OCI-LY7 (cell line): ENCODE measurements at regions of chr17 and their contacts with region 1.

Region 1: DNA sequence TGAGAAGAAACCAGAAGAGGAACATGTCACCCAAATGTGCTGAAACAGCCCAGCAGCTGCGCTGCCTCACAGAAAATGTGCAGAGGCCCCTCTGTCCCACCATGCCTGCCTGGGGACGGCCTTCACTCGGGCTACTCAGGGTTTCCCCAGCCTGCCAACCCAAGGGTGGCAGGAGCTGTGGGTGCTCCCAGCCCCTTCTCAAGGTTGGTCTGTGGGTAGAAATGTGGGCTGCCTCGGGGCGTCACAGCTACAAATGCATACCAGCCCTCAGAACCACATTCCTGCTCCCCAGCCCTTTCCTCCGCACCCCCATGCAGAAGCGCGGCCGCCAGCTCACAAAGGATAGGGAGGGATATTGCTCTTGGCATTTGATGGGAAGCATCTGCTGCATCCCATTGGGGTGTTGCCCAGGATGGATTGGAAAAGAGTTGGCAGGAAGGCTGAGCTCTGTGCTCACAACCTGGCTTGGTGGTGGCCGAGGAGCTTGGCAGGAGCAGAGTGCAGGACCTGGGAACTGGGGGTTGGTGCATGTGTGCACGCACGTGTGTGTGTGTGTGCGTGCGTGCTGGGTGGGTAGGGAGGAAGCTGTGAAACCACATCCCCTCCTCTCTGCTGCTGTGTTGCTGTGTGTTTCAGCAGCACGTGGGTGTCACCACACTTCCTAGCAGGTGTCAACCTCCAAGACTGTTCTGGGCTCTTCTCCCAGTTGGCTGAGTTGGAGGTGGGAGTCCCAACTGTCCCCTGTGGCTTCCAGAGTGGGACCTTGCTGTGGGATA is 304.4 kb downstream of the SEC14L1 start:
- DNase-seq: peak; percentile 97
- H3K4me3 ChIP-seq: peak overlapping the region; percentile 47
- H3K27ac ChIP-seq: peak overlapping the region; percentile 95
- H3K4me1 ChIP-seq: peaks cover 97% of the 10 kb centered on the region
- CTCF ChIP-seq: no peak

Region 2: GRCh38 chr17:76737082-76737675 is 708.0 kb before region 1 on chr17 and contains the start of gene SRSF2:
- CTCF ChIA-PET with region 1: no interaction called
- POLR2A ChIA-PET with region 1: no interaction called
- intact Hi-C with region 1: loop called (anchors 10 kb)
- DNase-seq: peak; percentile 100
- H3K4me3 ChIP-seq: peak within 1 kb of the TSS; percentile 77
- H3K27ac ChIP-seq: peak within 1 kb of the TSS; percentile 92
- H3K4me1 ChIP-seq: peaks cover 53% of the 10 kb centered on the region
- CTCF ChIP-seq: no peak
- total RNA-seq, gene SRSF2: 1,143 and 2,207 TPM in 2 replicates

Region 3: GRCh38 chr17:77331301-77331864 is 113.8 kb before region 1 on chr17:
- CTCF ChIA-PET with region 1: interaction called, 3 read pairs
- POLR2A ChIA-PET with region 1: interaction called, 4 read pairs
- intact Hi-C with region 1: loop called (anchors 5 kb)
- DNase-seq: peak; percentile 98
- H3K4me3 ChIP-seq: peak overlapping the region; percentile 62
- H3K27ac ChIP-seq: peak overlapping the region; percentile 92
- H3K4me1 ChIP-seq: peaks cover 86% of the 10 kb centered on the region
- CTCF ChIP-seq: peak; percentile 99

Region 4: GRCh38 chr17:77429919-77430752 is 15.0 kb before region 1 on chr17:
- CTCF ChIA-PET with region 1: interaction called, 15 read pairs
- POLR2A ChIA-PET with region 1: interaction called, 73 read pairs
- intact Hi-C with region 1: loop called (anchors 1 kb)
- DNase-seq: peak; percentile 89
- H3K4me3 ChIP-seq: peak overlapping the region; percentile 15
- H3K27ac ChIP-seq: peak overlapping the region; percentile 65
- H3K4me1 ChIP-seq: peaks cover 100% of the 10 kb centered on the region
- CTCF ChIP-seq: peak; percentile 99

Region 5: DNA sequence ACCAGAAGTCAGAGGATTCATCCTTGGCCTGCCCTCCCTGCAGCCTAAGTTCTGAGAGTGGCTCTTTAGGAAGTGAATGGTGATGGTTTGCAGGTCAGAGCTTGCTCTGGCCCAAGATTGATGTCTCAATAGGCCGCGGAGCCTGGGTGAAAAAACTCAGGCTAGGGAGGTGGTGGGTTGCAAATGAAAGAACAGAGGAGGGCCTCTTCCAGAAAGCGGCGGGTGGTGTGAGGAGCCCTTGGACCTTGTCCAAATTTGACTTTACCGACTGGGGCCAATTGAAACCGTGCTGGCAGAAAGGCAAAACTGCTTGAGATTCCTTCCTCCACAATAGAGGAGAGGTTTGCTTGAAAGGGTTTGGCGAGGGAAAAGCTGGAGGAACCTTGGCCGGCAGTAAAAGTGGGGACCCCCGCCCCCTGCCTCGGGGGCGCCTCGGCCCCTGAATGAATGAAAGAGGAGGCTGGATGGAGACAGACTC is 26.9 kb after region 1 on chr17:
- CTCF ChIA-PET with region 1: interaction called, 4 read pairs
- POLR2A ChIA-PET with region 1: interaction called, 60 read pairs
- intact Hi-C with region 1: no loop called
- DNase-seq: peak; percentile 39
- H3K4me3 ChIP-seq: peak overlapping the region; percentile 57
- H3K27ac ChIP-seq: peak overlapping the region; percentile 91
- H3K4me1 ChIP-seq: peaks cover 98% of the 10 kb centered on the region
- CTCF ChIP-seq: no peak

Region 6: DNA sequence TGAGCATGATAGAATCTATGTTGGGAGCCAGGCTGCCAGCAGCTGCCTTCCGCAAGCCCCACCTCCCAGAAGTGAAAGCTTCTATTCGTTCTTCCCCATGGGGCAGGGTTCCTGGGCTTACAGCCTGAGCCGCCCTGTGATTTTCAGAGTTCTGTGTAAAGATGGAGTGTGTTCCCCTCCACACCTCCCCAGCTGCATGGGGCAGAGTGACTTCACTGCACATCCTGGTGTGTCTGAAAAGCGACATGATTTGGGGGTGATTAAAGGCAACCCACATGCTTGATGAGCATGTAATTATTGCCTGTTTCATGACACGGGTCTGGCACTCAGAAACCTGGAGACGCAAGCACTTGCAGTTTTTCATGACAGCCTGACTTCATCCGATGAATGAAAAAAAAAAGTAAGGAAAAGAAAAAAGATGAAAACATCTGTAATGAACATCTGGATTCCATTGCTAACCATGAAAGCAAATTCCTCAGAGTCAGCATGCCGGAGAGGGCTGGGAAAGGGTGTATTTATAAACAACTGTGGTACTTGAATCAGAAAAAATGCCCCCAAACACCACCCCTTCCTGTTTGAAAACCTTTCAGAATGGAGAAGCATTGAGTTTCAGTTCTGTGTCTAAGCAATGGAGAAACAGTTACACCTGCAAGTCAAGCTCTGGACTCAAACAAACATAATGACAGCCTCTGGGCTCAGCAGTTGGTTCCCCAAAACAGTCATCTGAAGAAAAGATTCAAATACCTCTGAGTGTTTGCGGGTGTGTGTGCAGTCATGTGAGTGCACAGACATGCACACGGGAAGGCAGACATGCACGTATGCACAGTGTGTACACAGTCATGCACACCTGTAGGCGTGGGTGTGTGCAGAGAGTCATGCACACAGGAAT is 1895.4 kb after region 1 on chr17:
- CTCF ChIA-PET with region 1: no interaction called
- POLR2A ChIA-PET with region 1: no interaction called
- intact Hi-C with region 1: loop called (anchors 10 kb)
- DNase-seq: peak; percentile 96
- H3K4me3 ChIP-seq: peak overlapping the region; percentile 61
- H3K27ac ChIP-seq: peak overlapping the region; percentile 98
- H3K4me1 ChIP-seq: peaks cover 58% of the 10 kb centered on the region
- CTCF ChIP-seq: no peak